Right ventricle myocardium inferior (tissue), 1 donor: ENCODE measurements at regions of chr9 and their contacts with region 1.

Region 1: DNA sequence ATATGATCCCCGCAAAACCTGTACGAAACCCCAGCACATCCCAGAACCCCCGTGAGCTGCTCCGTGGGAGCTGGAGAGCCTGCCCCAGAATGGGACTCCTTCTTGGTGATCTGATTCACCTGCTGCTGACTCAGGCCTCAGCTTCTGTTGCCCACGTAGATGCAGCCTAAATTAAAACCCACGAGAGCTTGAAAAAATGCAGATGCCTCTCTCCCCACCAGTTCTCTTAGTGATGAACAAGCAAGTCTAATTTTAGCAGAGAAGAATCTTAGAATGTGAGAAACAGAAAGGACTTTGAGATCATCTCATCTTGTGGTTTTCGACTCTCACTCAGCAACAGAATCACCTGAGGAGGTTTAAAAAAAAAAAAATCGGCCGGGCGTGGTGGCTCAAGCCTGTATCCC is 57.6 kb downstream of the TMOD1 start:
- DNase-seq: no peak
- ATAC-seq: no peak

Region 2: DNA sequence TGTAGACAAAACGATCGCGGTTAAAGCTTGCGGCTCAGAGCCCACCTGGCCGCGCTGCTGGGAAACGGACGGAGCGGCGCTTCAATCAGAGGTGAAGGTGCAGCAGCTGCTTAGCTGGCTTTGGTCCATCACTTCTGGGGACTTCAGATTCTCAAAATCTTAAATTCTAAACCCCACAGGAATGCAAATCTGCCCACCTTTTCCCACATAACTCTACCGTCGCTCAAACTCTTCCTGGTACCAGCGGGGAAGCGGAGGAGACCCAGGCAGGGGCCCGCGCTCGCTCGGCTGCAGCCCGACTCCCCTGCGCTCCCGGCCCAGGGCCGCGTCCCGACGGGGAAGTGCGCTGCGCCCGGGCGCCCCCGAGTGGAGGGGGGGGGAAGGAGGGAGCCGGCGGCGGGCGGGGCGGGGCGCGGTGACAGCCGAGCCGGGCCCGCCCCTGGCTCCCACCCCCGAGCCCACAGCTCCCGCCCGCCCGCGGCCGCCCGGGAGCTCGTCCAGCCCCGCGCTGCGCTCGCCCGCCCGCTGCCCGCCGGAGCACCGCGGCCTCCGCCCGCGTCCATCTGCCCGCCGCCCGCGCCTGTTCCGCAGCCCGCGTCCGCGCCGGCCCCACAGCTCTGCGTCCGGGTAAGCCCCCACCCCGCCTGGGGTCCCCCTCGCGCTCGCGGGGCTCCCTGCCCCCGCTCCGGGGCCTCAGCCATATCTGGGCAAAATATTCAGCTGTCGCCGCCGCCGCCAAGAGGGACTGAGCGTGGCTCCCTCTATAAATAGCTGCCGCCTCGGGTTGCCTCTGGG is 57.7 kb before region 1 on chr9 and contains the start of gene TMOD1:
- intact Hi-C with region 1: loop called (anchors 2 kb)
- DNase-seq: peak; percentile 84
- ATAC-seq: peak; percentile 84
- total RNA-seq, gene TMOD1: 192 TPM

Region 3: GRCh38 chr9:97518909-97519307 is 40.2 kb before region 1 on chr9:
- intact Hi-C with region 1: loop called (anchors 5 kb)
- DNase-seq: no peak
- ATAC-seq: no peak

Region 4: GRCh38 chr9:97529363-97530076 is 29.6 kb before region 1 on chr9:
- intact Hi-C with region 1: loop called (anchors 2 kb)
- DNase-seq: no peak
- ATAC-seq: peak; percentile 85